ENCODE measurements at regions of chr5 and their contacts with region 1.

Region 1: DNA sequence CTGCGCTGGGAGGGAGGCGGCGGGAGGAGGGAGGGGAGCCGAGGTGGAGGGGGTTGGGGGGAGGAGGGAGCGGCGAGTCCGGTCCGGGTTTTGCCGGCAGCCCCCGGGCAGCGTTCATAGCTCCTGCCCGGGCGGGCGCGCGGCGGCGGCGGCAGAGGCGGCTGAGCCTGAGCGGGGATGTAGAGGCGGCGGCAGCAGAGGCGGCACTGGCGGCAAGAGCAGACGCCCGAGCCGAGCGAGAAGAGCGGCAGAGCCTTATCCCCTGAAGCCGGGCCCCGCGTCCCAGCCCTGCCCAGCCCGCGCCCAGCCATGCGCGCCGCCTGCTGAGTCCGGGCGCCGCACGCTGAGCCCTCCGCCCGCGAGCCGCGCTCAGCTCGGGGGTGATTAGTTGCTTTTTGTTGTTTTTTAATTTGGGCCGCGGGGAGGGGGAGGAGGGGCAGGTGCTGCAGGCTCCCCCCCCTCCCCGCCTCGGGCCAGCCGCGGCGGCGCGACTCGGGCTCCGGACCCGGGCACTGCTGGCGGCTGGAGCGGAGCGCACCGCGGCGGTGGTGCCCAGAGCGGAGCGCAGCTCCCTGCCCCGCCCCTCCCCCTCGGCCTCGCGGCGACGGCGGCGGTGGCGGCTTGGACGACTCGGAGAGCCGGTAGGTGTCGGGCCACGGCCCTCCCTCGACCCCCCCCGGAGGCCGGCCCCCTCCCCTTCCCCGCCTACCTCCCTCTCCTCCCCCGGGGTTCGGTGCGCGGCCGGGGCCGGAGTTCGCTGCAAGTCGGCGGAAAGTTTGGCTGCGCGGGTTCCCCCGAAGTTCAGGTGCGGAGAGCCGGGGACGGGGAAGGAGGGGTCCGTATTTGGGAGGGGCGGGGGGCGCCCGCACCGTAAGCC is at the start of gene CXXC5:
- DNase-seq: peak; percentile 74 to 92
- H3K4me3 ChIP-seq: peak within 1 kb of the TSS; percentile 74
- H3K4me1 ChIP-seq: peaks cover 18% of the 10 kb centered on the region
- H3K27me3 ChIP-seq: no peaks in the 10 kb centered on the region

Region 2: DNA sequence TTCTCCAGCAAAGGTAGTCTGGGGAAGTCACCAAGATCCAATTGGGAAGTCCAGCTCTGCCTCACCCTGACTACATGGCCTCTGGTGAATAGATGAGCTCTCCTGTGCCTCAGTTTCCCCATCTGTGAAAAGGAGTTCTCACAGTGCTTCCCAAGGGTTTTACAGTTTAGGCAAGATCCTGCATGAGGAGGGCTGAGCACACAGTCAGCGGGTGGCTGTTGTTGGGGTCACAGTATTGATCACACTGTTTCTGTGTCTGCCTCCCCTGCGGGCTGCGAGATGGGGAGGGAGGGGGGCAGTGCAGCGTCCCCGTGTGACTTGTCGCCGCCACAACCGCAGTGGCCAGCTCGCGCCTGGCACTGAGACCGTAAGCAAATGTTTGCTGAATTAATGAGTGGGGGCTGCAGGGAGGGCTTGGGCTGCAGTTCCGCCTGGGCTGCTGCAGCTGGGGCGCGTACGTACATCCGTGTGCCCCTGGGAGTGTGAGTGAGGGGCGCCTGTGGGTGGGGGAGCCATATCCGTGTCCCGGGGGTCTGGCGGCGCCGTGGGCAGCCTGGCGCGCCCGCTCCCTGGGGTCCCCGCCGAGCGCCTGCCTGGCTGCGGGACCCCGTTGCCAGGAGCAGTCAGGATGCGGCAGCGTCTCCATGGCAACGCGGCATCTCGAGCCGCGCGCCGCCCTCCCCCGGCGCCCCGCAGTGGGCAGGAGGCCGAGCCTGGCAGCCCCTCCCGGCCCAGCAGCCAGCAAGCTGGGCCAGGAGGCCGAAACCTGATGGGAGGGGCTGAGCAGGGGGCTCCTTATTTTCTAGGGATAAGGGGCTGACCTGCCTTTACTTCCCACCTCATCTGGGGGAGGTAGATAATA is 115.7 kb after region 1 on chr5:
- in situ Hi-C with region 1: loop called (anchors 5 kb)
- DNase-seq: no peak
- H3K4me3 ChIP-seq: no peak overlapping the region
- H3K4me1 ChIP-seq: 0 out of 2 replicates have a peak, but pooled peaks cover 2% of the 10 kb centered on the region
- H3K27me3 ChIP-seq: no peaks in the 10 kb centered on the region